ENCODE measurements at regions of chr19 and their contacts with region 1.

Region 1: GRCh38 chr19:58346961-58347931 is 6.0 kb downstream of the A1BG start:
- DNase-seq: peak; percentile 65 to 78
- ATAC-seq: peak; percentile 87 to 95
- H3K4me3 ChIP-seq: peak overlapping the region; percentile 53
- H3K27ac ChIP-seq: peak overlapping the region; percentile 52 to 82
- H3K4me1 ChIP-seq: 0 out of 3 replicates have a peak, but pooled peaks cover 8% of the 10 kb centered on the region
- CTCF ChIP-seq: no peak
- EP300 ChIP-seq: no peak
- POLR2A ChIP-seq: peak; percentile 40
- RAD21 ChIP-seq: no peak

Region 2: GRCh38 chr19:58243351-58243750 is 103.9 kb before region 1 on chr19:
- CTCF ChIA-PET with region 1: no interaction called
- POLR2A ChIA-PET with region 1: no interaction called
- DNase-seq: no peak
- ATAC-seq: no peak; a peak in 2 of 6 replicates
- H3K4me3 ChIP-seq: no peak overlapping the region
- H3K27ac ChIP-seq: no peak overlapping the region
- H3K4me1 ChIP-seq: no peaks in the 10 kb centered on the region
- CTCF ChIP-seq: no peak
- EP300 ChIP-seq: no peak
- POLR2A ChIP-seq: no peak
- RAD21 ChIP-seq: no peak

Region 3: GRCh38 chr19:58317476-58318072 is 29.7 kb before region 1 on chr19:
- CTCF ChIA-PET with region 1: no interaction called
- POLR2A ChIA-PET with region 1: no interaction called
- DNase-seq: peak in 1 of 2 experiments; percentile 51
- ATAC-seq: peak; percentile 40 to 58; a peak in 4 of 6 replicates
- H3K4me3 ChIP-seq: no peak overlapping the region
- H3K27ac ChIP-seq: no peak overlapping the region
- H3K4me1 ChIP-seq: no peaks in the 10 kb centered on the region
- CTCF ChIP-seq: no peak
- EP300 ChIP-seq: no peak
- POLR2A ChIP-seq: no peak
- RAD21 ChIP-seq: no peak

Region 4: GRCh38 chr19:58334691-58335249 is 12.5 kb before region 1 on chr19:
- CTCF ChIA-PET with region 1: interaction called, 14 read pairs
- POLR2A ChIA-PET with region 1: no interaction called
- DNase-seq: no peak
- ATAC-seq: no peak
- H3K4me3 ChIP-seq: no peak overlapping the region
- H3K27ac ChIP-seq: no peak overlapping the region
- H3K4me1 ChIP-seq: no peaks in the 10 kb centered on the region
- CTCF ChIP-seq: no peak
- EP300 ChIP-seq: no peak
- POLR2A ChIP-seq: no peak
- RAD21 ChIP-seq: no peak